HCT116 (cell line): ENCODE measurements at regions of chr22 and their contacts with region 1.

Region 1: DNA sequence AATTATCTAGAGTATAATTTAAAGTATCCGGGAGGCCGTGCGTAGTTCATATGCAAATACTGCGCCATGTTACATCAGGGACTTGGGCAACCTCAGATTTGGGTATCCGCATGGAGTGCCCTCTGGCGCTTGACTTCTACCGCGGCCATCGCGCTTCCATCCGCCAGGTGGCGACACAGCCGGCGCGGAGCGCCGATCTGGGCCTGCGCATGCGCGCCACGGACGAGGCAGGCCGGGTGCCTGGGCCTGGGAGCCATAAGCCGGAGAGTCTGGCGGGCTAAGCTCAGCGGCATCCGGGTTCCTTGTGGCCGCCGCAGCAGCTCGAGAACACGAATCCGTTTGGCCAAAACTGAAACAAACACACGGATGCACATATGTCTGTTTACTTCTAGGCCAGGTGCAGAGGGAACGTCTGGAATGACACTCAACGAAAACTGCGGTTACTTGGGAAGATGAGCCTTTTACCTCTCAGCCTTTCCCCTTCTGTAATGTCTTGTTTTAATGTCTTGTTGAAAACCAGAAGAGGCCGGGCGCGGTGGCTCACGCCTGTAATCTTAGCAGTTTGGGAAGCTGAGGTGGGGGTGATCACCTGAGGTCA is 21.9 kb downstream of the SNU13 start:
- DNase-seq: peak; percentile 84
- ATAC-seq: peak; percentile 83
- H3K4me3 ChIP-seq: peak overlapping the region; percentile 56 to 61
- H3K27ac ChIP-seq: peak overlapping the region; percentile 86
- H3K4me1 ChIP-seq: peaks cover 19 to 50% of the 10 kb centered on the region in 2 experiments
- H3K27me3 ChIP-seq: no peaks in the 10 kb centered on the region
- CTCF ChIP-seq: peak; percentile 98 to 100 (median 99)
- POLR2A ChIP-seq: peak; percentile 88
- RAD21 ChIP-seq: peak; percentile 86

Region 2: DNA sequence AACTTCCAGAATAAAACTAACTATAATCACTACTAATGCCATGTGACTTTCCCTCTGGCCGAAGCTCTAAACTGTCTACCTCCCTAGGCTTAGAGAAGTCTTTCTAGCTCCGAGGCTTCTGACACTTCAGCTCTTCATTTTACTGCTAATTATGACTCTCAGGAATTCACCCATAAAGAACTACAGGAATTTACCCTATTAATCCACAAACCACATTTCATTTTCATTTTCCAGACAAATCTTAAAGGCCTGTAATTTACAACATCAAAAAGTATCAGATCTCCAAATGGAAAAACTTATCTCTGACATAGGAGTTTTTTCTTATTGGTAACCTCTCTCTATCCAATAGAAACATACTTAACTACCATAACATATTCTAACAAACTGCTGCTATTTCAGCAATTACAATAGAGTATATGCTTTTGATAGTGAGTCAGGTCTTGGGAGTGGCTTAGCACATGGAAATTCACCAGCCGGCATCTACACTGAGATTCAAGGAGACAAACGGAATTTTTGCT is 1063.6 kb before region 1 on chr22:
- CTCF ChIA-PET with region 1: no interaction called
- POLR2A ChIA-PET with region 1: no interaction called
- RAD21 ChIA-PET with region 1: no interaction called
- intact Hi-C with region 1: no loop called
- DNase-seq: no peak
- ATAC-seq: 0 out of 2 replicates have a peak, but pooled peaks have one; percentile 34
- H3K4me3 ChIP-seq: no peak overlapping the region
- H3K27ac ChIP-seq: peak overlapping the region; percentile 68; the same call in 1 of the 2 replicates
- H3K4me1 ChIP-seq: peaks cover 31 to 41% of the 10 kb centered on the region in 2 experiments
- H3K27me3 ChIP-seq: no peaks in the 10 kb centered on the region
- CTCF ChIP-seq: no peak
- POLR2A ChIP-seq: no peak
- RAD21 ChIP-seq: no peak

Region 3: DNA sequence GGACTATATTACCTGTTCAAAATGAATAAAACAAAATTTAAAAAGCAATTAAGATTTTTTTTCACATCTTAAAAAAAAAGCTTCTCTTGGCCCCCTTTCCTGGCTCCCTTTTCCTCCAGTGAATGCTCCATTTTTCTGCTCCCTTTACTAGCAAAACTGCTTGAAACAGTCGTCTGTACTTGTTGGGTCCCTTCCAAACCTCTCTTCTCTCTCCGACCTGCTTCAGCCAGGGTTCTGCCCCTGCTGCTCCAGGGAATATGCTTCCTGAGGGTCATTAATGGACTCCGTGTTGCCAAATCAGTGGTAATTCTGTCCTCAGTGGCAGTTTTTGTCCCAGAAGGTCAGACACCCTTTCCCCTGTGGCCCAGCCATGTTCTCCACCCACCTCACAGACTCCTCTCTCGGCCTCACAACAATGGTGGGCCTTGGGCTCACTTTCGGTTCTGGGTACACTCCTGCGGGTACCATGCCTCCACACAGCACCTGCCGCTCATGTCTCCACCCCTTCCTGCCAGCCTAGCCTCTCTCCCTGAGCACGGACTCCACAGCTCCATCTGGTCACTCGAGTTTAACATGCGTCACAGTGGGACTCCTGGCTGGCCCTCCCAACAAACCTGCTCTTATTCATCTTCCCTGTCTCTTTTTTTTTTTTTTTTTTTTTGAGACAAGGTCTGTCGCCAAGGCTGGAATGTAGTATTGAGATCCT is 114.7 kb before region 1 on chr22:
- CTCF ChIA-PET with region 1: no interaction called
- POLR2A ChIA-PET with region 1: no interaction called
- RAD21 ChIA-PET with region 1: no interaction called
- intact Hi-C with region 1: no loop called
- DNase-seq: no peak
- ATAC-seq: no peak
- H3K4me3 ChIP-seq: no peak overlapping the region
- H3K27ac ChIP-seq: no peak overlapping the region
- H3K4me1 ChIP-seq: peaks cover 2 to 12% of the 10 kb centered on the region in 2 experiments; a peak in 3 of 4 replicates
- H3K27me3 ChIP-seq: no peaks in the 10 kb centered on the region
- CTCF ChIP-seq: no peak
- POLR2A ChIP-seq: no peak
- RAD21 ChIP-seq: no peak

Region 4: GRCh38 chr22:41654322-41654721 is 12.4 kb before region 1 on chr22:
- CTCF ChIA-PET with region 1: interaction called, 11 read pairs
- POLR2A ChIA-PET with region 1: interaction called, 5 read pairs
- RAD21 ChIA-PET with region 1: no interaction called
- intact Hi-C with region 1: no loop called
- DNase-seq: no peak
- ATAC-seq: no peak
- H3K4me3 ChIP-seq: no peak overlapping the region
- H3K27ac ChIP-seq: no peak overlapping the region
- H3K4me1 ChIP-seq: no peaks in the 10 kb centered on the region
- H3K27me3 ChIP-seq: no peaks in the 10 kb centered on the region
- CTCF ChIP-seq: no peak
- POLR2A ChIP-seq: no peak
- RAD21 ChIP-seq: no peak

Region 5: GRCh38 chr22:41681616-41682015 is 14.9 kb after region 1 on chr22:
- CTCF ChIA-PET with region 1: interaction called, 17 read pairs
- POLR2A ChIA-PET with region 1: no interaction called
- RAD21 ChIA-PET with region 1: no interaction called
- intact Hi-C with region 1: no loop called
- DNase-seq: no peak
- ATAC-seq: peak; percentile 20; the same call in 1 of the 2 replicates
- H3K4me3 ChIP-seq: peak overlapping the region; percentile 72 to 77
- H3K27ac ChIP-seq: peak overlapping the region; percentile 66; the same call in 1 of the 2 replicates
- H3K4me1 ChIP-seq: peaks cover 8 to 23% of the 10 kb centered on the region in 2 experiments
- H3K27me3 ChIP-seq: no peaks in the 10 kb centered on the region
- CTCF ChIP-seq: no peak
- POLR2A ChIP-seq: no peak
- RAD21 ChIP-seq: no peak

Region 6: GRCh38 chr22:41688365-41689211 is 21.8 kb after region 1 on chr22 and contains the start of gene SNU13:
- CTCF ChIA-PET with region 1: interaction called, 11 read pairs
- POLR2A ChIA-PET with region 1: interaction called, 12 read pairs
- RAD21 ChIA-PET with region 1: no interaction called
- intact Hi-C with region 1: loop called (anchors 2 kb)
- DNase-seq: peak; percentile 77
- ATAC-seq: peak; percentile 92
- H3K4me3 ChIP-seq: peak within 1 kb of the TSS; percentile 69 to 90
- H3K27ac ChIP-seq: peak within 1 kb of the TSS; percentile 96
- H3K4me1 ChIP-seq: peaks cover 2 to 37% of the 10 kb centered on the region in 2 experiments
- H3K27me3 ChIP-seq: no peaks in the 10 kb centered on the region
- CTCF ChIP-seq: no peak
- POLR2A ChIP-seq: peak; percentile 77
- RAD21 ChIP-seq: no peak
- total RNA-seq, gene SNU13: 283 TPM

Region 7: GRCh38 chr22:41762980-41763779 is 96.4 kb after region 1 on chr22:
- CTCF ChIA-PET with region 1: no interaction called
- POLR2A ChIA-PET with region 1: no interaction called
- RAD21 ChIA-PET with region 1: no interaction called
- intact Hi-C with region 1: no loop called
- DNase-seq: peak; percentile 28
- ATAC-seq: peak; percentile 89
- H3K4me3 ChIP-seq: no peak overlapping the region
- H3K27ac ChIP-seq: no peak overlapping the region
- H3K4me1 ChIP-seq: peaks cover 0 to under 1% of the 10 kb centered on the region in 2 experiments; a peak in 1 of 4 replicates
- H3K27me3 ChIP-seq: no peaks in the 10 kb centered on the region
- CTCF ChIP-seq: peak; percentile 29 to 80 (median 78); a peak in 5 of 6 replicates
- POLR2A ChIP-seq: no peak
- RAD21 ChIP-seq: peak; percentile 36; the same call in 1 of the 2 replicates

Region 8: GRCh38 chr22:41780746-41781505 is 114.2 kb after region 1 on chr22:
- CTCF ChIA-PET with region 1: no interaction called
- POLR2A ChIA-PET with region 1: no interaction called
- RAD21 ChIA-PET with region 1: no interaction called
- intact Hi-C with region 1: no loop called
- DNase-seq: no peak
- ATAC-seq: no peak
- H3K4me3 ChIP-seq: no peak overlapping the region
- H3K27ac ChIP-seq: no peak overlapping the region
- H3K4me1 ChIP-seq: peaks cover 0 to 8% of the 10 kb centered on the region in 2 experiments; a peak in 1 of 4 replicates
- H3K27me3 ChIP-seq: no peaks in the 10 kb centered on the region
- CTCF ChIP-seq: no peak
- POLR2A ChIP-seq: no peak
- RAD21 ChIP-seq: no peak

Region 9: DNA sequence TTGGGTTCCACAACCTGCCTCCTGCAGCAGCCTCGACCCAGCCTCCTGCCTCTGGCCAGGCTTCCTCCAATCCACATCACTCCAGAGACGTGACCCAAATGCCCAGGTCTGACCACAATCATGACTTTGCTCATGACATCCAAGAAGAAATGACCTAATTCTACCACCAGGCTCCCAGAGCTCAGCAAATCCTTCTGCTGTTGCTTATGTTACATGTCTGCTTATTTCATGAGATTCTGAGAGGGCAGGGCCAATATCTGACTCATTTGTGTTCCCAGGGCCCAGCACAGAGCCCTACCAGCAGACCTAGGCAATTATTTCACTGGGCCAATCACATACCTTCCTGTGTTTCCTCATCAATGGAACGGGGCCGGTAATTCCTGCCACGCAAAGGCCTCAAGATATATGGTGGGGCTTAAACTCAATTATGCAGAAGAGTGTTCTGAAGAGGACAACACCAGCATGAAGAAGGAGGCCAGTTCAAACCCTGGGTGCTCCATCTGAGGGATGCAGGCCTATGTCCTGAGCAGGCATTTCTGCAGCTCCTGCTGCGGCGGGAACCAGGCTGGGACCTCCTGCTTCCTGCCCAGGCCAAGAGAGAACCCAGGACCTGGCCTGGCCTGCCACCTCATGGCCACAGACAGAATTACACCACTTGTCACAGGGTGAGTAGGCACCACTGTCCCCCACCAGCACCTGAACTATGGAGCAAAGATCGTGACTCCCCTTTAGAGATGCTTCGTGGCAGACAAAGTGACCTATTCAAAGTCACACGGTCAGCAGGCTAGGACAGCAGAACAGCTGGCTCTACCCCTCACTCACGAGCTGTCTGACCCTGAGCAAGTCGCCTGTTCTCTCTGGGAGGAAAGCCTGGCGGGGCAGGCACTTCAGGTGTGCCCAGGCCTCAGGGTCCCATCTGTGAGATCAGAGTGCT is 274.3 kb after region 1 on chr22:
- CTCF ChIA-PET with region 1: interaction called, 14 read pairs
- POLR2A ChIA-PET with region 1: interaction called, 6 read pairs
- RAD21 ChIA-PET with region 1: no interaction called
- intact Hi-C with region 1: no loop called
- DNase-seq: no peak
- ATAC-seq: peak; percentile 89
- H3K4me3 ChIP-seq: no peak overlapping the region
- H3K27ac ChIP-seq: no peak overlapping the region; the same call in 1 of the 2 replicates
- H3K4me1 ChIP-seq: peaks cover 3 to 21% of the 10 kb centered on the region in 2 experiments; a peak in 3 of 4 replicates
- H3K27me3 ChIP-seq: no peaks in the 10 kb centered on the region
- CTCF ChIP-seq: peak; percentile 81 to 87 (median 83)
- POLR2A ChIP-seq: no peak
- RAD21 ChIP-seq: peak; percentile 91